Naive thymus-derived CD4-positive, alpha-beta T cell (primary cell): ENCODE measurements at regions of chr17 and their contacts with region 1.

Region 1: GRCh38 chr17:18033442-18034099 is 5.4 kb downstream of the ATPAF2 start:
- DNase-seq: peak in 8 of 9 donors; percentile 37 to 81 (median 70)
- ATAC-seq: peak; percentile 98
- H3K4me3 ChIP-seq: no peak overlapping the region
- H3K4me3 Mint-ChIP-seq: no peak overlapping the region
- H3K27ac ChIP-seq: no peak overlapping the region
- H3K27ac Mint-ChIP-seq: peak overlapping the region in 4 of 9 donors; percentile 3 to 79 (median 42)
- H3K4me1 ChIP-seq: peaks cover 17 to 21% of the 10 kb centered on the region in 2 donors
- H3K4me1 Mint-ChIP-seq: peaks cover 19 to 42% (median 31%) of the 10 kb centered on the region in 7 donors
- H3K27me3 ChIP-seq: no peaks in the 10 kb centered on the region
- H3K27me3 Mint-ChIP-seq: no peaks in the 10 kb centered on the region

Region 2: GRCh38 chr17:17729620-17730249 is 303.8 kb before region 1 on chr17:
- CTCF ChIA-PET with region 1: interaction called, 6 read pairs
- POLR2A ChIA-PET with region 1: interaction called, 3 read pairs
- intact Hi-C with region 1: loop called in 1 of 2 experiments (anchors 1 kb)
- DNase-seq: peak in 8 of 9 donors; percentile 39 to 74 (median 63)
- ATAC-seq: peak; percentile 87
- H3K4me3 ChIP-seq: no peak overlapping the region
- H3K4me3 Mint-ChIP-seq: peak overlapping the region in 1 of 10 donors; percentile 8
- H3K27ac ChIP-seq: no peak overlapping the region
- H3K27ac Mint-ChIP-seq: peak overlapping the region in 7 of 9 donors; percentile 35 to 92 (median 68)
- H3K4me1 ChIP-seq: peaks cover 0 to 15% of the 10 kb centered on the region in 2 donors
- H3K4me1 Mint-ChIP-seq: peaks cover 11 to 40% (median 35%) of the 10 kb centered on the region in 7 donors
- H3K27me3 ChIP-seq: no peaks in the 10 kb centered on the region
- H3K27me3 Mint-ChIP-seq: peaks cover 0 to 5% (median 0%) of the 10 kb centered on the region in 5 donors

Region 3: GRCh38 chr17:17859909-17860765 is 173.4 kb before region 1 on chr17:
- CTCF ChIA-PET with region 1: interaction called, 12 read pairs
- POLR2A ChIA-PET with region 1: no interaction called
- intact Hi-C with region 1: loop called in 1 of 2 experiments (anchors 1 kb)
- DNase-seq: peak; percentile 50 to 77 (median 68)
- ATAC-seq: peak; percentile 97
- H3K4me3 ChIP-seq: no peak overlapping the region
- H3K4me3 Mint-ChIP-seq: no peak overlapping the region
- H3K27ac ChIP-seq: no peak overlapping the region
- H3K27ac Mint-ChIP-seq: peak overlapping the region in 3 of 9 donors; percentile 46 to 70 (median 58)
- H3K4me1 ChIP-seq: peaks cover 0 to 28% of the 10 kb centered on the region in 2 donors
- H3K4me1 Mint-ChIP-seq: peaks cover 13 to 67% (median 52%) of the 10 kb centered on the region in 7 donors
- H3K27me3 ChIP-seq: no peaks in the 10 kb centered on the region
- H3K27me3 Mint-ChIP-seq: no peaks in the 10 kb centered on the region

Region 4: GRCh38 chr17:17890773-17891759 is 142.5 kb before region 1 on chr17:
- CTCF ChIA-PET with region 1: interaction called, 29 read pairs
- POLR2A ChIA-PET with region 1: no interaction called
- intact Hi-C with region 1: loop called (anchors 1 kb)
- DNase-seq: peak; percentile 26 to 60 (median 43)
- ATAC-seq: peak; percentile 83
- H3K4me3 ChIP-seq: no peak overlapping the region
- H3K4me3 Mint-ChIP-seq: no peak overlapping the region
- H3K27ac ChIP-seq: no peak overlapping the region
- H3K27ac Mint-ChIP-seq: peak overlapping the region in 7 of 9 donors; percentile 17 to 90 (median 54)
- H3K4me1 ChIP-seq: no peaks in the 10 kb centered on the region
- H3K4me1 Mint-ChIP-seq: peaks cover 3 to 21% (median 17%) of the 10 kb centered on the region in 7 donors
- H3K27me3 ChIP-seq: no peaks in the 10 kb centered on the region
- H3K27me3 Mint-ChIP-seq: no peaks in the 10 kb centered on the region

Region 5: DNA sequence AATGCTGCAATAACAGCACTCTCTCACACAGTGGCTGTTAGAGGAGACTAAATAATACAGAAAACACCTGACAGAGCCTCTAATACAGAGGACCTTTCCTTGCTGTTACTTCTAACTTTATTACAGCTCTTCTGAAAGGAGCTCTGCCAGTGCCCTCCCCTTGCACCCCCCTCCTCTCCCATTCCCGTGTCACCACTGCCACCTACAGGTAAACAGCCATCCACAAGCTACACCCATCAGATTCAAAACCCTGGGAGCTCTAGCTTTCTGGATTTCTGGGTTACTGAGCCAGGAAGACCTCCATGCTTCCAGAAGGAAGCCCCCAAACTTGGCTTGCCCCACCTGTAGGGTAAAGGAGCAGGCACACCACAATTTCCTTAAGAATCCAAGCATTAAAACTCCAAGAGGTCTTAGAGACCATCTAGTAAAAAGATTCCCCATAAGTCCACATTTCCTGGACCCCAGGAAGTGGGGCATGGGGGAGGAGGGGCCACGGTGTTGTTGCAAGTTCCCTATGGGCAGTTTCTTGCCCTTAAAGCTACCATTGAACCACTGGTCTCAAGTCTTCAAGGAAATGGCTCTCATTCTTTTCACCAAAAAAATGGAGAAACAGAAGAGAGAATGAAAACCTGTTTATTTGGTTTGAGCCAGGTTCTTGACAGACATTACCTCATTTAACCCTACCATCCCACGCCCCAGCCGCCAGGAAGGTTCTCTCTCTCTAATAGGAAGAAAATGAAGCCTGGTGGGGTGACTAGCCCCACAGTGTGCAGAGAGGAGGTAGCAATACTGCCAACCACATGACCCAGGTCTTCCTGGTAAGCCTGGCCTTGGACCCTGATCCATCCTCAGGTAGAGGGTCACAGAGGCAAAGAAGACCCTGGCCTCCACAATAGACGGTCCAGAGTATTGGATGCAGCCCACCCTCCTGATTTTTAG is 114.1 kb before region 1 on chr17:
- CTCF ChIA-PET with region 1: interaction called, 6 read pairs
- POLR2A ChIA-PET with region 1: interaction called, 3 read pairs
- intact Hi-C with region 1: loop called in 1 of 2 experiments (anchors 1 kb)
- DNase-seq: peak; percentile 18 to 77 (median 67)
- ATAC-seq: peak; percentile 90
- H3K4me3 ChIP-seq: no peak overlapping the region
- H3K4me3 Mint-ChIP-seq: no peak overlapping the region
- H3K27ac ChIP-seq: no peak overlapping the region
- H3K27ac Mint-ChIP-seq: peak overlapping the region in 5 of 9 donors; percentile 17 to 49 (median 34)
- H3K4me1 ChIP-seq: peaks cover 0 to 6% of the 10 kb centered on the region in 2 donors
- H3K4me1 Mint-ChIP-seq: peaks cover 21 to 34% (median 26%) of the 10 kb centered on the region in 7 donors
- H3K27me3 ChIP-seq: no peaks in the 10 kb centered on the region
- H3K27me3 Mint-ChIP-seq: no peaks in the 10 kb centered on the region